ENCODE measurements at regions of chr9 and their contacts with region 1.

Region 1: DNA sequence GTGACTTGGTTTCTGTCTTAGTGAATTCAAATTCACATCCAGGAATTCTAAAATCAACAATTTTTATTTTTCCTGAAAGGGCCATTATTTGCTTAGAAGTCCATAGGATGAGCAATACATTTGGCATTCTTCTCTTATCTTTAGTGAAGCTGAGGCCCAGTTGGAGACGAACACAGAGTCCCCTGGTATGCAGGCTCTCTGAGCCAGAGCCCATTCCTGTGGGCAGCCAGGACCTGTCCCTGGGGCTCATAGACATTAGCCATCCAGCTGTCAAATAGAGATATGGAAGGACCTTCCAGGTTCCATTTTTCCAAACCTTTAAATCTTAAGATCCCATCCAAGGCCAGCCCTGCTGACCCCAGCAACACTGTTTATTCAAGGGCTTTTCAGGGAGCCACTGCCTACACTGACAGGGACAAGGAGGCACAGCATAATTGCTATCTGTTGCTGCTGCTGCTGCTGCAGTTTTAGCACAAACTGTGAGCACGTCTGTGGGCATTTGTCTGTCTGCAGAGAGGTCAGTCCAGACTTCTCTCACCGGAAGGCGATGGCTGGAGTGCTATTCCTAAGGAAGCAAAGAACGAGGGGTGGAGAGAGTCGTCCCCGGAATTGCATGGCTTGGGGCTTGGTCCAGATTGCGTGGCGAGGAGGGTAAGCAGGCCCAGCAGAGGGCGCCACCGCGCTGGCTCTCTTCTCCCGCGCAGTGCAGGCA is 639.0 kb downstream of the CCDC171 start:
- DNase-seq: peak; percentile 87
- ATAC-seq: peak; percentile 89
- H3K4me3 ChIP-seq: peak overlapping the region; percentile 1; the same call in 1 of the 2 replicates
- H3K27ac ChIP-seq: peak overlapping the region; percentile 92
- H3K4me1 ChIP-seq: peaks cover 28% of the 10 kb centered on the region
- H3K27me3 ChIP-seq: no peaks in the 10 kb centered on the region
- CTCF ChIP-seq: peak; percentile 91
- POLR2A ChIP-seq: no peak
- RAD21 ChIP-seq: peak; percentile 95

Region 2: GRCh38 chr9:15873569-15874177 is 318.2 kb before region 1 on chr9:
- CTCF ChIA-PET with region 1: no interaction called
- POLR2A ChIA-PET with region 1: no interaction called
- dilution Hi-C with region 1: no loop called
- in situ Hi-C with region 1: no loop called
- intact Hi-C with region 1: loop called (anchors 1 kb)
- DNase-seq: peak; percentile 74
- ATAC-seq: peak; percentile 70; the same call in 1 of the 2 replicates
- H3K4me3 ChIP-seq: no peak overlapping the region
- H3K27ac ChIP-seq: no peak overlapping the region
- H3K4me1 ChIP-seq: no peaks in the 10 kb centered on the region; the same call in 1 of the 2 replicates
- H3K27me3 ChIP-seq: no peaks in the 10 kb centered on the region
- CTCF ChIP-seq: peak; percentile 82
- POLR2A ChIP-seq: no peak
- RAD21 ChIP-seq: peak; percentile 87

Region 3: GRCh38 chr9:16013826-16014225 is 178.0 kb before region 1 on chr9:
- CTCF ChIA-PET with region 1: no interaction called
- POLR2A ChIA-PET with region 1: no interaction called
- dilution Hi-C with region 1: no loop called
- in situ Hi-C with region 1: no loop called
- intact Hi-C with region 1: no loop called
- DNase-seq: no peak
- ATAC-seq: no peak
- H3K4me3 ChIP-seq: no peak overlapping the region
- H3K27ac ChIP-seq: no peak overlapping the region
- H3K4me1 ChIP-seq: peaks cover 7% of the 10 kb centered on the region; the same call in 1 of the 2 replicates
- H3K27me3 ChIP-seq: no peaks in the 10 kb centered on the region
- CTCF ChIP-seq: no peak
- POLR2A ChIP-seq: no peak
- RAD21 ChIP-seq: no peak

Region 4: GRCh38 chr9:16335788-16336580 is 144.1 kb after region 1 on chr9:
- CTCF ChIA-PET with region 1: no interaction called
- POLR2A ChIA-PET with region 1: no interaction called
- dilution Hi-C with region 1: no loop called
- in situ Hi-C with region 1: no loop called
- intact Hi-C with region 1: loop called (anchors 5 kb)
- DNase-seq: peak; percentile 99
- ATAC-seq: peak; percentile 91
- H3K4me3 ChIP-seq: no peak overlapping the region
- H3K27ac ChIP-seq: peak overlapping the region; percentile 96
- H3K4me1 ChIP-seq: peaks cover 18% of the 10 kb centered on the region
- H3K27me3 ChIP-seq: no peaks in the 10 kb centered on the region
- CTCF ChIP-seq: no peak
- POLR2A ChIP-seq: no peak
- RAD21 ChIP-seq: peak; percentile 29

Region 5: DNA sequence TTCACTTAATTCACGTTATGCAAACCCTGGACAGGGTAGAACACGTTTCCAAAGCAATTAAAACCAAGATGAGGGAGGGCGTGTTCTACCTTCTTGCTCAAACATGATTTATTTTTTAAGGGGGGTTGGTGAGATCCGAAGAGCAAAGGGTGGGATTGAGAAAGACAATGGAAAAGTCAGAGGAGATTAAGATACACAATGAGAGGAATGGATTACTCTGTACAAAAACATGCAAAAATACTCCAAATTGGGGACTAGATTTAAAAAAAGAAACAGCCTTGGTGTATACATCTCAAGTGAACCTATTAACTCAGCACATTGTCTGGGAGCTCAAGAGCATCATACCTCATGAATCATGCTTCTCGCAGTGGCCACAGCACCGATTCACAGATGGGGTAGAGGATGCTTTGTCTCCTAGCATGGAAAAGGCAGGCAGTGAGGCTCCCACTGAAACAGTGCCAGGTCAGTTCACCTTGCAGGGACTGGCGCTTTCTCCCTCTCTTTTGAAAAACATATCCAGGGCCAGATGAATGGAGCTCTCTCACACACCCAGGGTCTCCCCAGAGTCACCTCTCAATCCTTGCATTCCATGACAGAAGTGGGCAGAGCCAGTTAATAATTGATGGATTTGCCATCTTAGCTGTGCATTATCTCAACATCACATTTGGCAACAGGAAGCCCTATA is 218.9 kb after region 1 on chr9:
- CTCF ChIA-PET with region 1: no interaction called
- POLR2A ChIA-PET with region 1: no interaction called
- dilution Hi-C with region 1: no loop called
- in situ Hi-C with region 1: no loop called
- intact Hi-C with region 1: no loop called
- DNase-seq: peak; percentile 85
- ATAC-seq: peak; percentile 33; the same call in 1 of the 2 replicates
- H3K4me3 ChIP-seq: no peak overlapping the region
- H3K27ac ChIP-seq: no peak overlapping the region
- H3K4me1 ChIP-seq: peaks cover 16% of the 10 kb centered on the region
- H3K27me3 ChIP-seq: no peaks in the 10 kb centered on the region; the same call in 1 of the 2 replicates
- CTCF ChIP-seq: no peak
- POLR2A ChIP-seq: no peak
- RAD21 ChIP-seq: no peak

Region 6: DNA sequence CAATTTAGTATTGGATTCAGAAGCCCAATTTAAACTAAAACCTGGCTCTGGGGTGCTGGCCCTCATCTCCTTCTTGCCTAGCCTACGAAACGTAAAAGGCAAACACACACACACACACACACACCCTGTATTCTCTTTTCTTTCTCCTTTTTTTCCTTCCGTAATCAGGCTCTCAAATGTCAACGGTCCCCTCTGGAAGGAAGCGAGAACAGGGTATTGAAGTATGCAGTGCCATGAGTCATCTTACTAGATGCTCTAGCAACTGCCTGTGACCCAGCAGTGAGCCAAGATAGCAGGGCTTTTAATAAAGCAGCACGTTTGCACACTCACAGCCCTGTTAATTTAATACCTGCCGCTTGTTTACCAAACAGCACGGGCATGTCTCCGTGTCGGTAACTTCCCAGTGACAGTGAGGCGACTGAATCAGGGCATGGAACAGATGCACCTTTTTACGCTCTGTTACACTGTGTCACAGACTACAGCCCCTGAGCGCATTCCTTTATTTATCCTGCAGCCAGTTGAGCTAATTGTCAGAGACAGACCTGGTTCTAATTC is 434.8 kb after region 1 on chr9:
- CTCF ChIA-PET with region 1: no interaction called
- POLR2A ChIA-PET with region 1: no interaction called
- dilution Hi-C with region 1: no loop called
- in situ Hi-C with region 1: no loop called
- intact Hi-C with region 1: loop called (anchors 10 kb)
- DNase-seq: peak; percentile 89
- ATAC-seq: peak; percentile 84
- H3K4me3 ChIP-seq: no peak overlapping the region
- H3K27ac ChIP-seq: peak overlapping the region; percentile 42
- H3K4me1 ChIP-seq: peaks cover 26% of the 10 kb centered on the region
- H3K27me3 ChIP-seq: no peaks in the 10 kb centered on the region
- CTCF ChIP-seq: no peak
- POLR2A ChIP-seq: no peak
- RAD21 ChIP-seq: no peak

Region 7: DNA sequence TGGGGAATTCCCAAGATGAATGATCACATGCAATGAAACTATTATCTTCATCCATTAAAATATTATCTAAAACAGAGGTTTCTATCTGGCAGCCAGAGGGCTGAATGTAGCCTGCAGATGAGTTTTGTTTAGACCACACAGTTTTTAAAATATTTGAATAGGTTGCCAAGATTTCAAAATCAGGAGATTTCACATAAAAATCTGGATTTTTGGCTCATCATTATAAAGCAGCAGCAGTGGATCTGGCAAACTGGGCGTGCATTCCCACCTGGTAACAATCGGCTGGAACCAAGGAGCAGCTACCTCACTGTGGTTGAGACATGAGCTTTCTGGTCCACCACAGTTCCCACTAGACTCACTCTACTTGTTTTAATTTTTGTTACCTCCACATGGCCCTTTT is 523.6 kb after region 1 on chr9:
- CTCF ChIA-PET with region 1: no interaction called
- POLR2A ChIA-PET with region 1: no interaction called
- dilution Hi-C with region 1: no loop called
- in situ Hi-C with region 1: loop called (anchors 10 kb)
- intact Hi-C with region 1: no loop called
- DNase-seq: peak; percentile 73
- ATAC-seq: peak; percentile 49
- H3K4me3 ChIP-seq: no peak overlapping the region
- H3K27ac ChIP-seq: no peak overlapping the region; the same call in 1 of the 2 replicates
- H3K4me1 ChIP-seq: peaks cover 14% of the 10 kb centered on the region
- H3K27me3 ChIP-seq: no peaks in the 10 kb centered on the region
- CTCF ChIP-seq: no peak
- POLR2A ChIP-seq: no peak
- RAD21 ChIP-seq: no peak

Region 8: GRCh38 chr9:16970321-16970720 is 778.5 kb after region 1 on chr9:
- CTCF ChIA-PET with region 1: no interaction called
- POLR2A ChIA-PET with region 1: no interaction called
- dilution Hi-C with region 1: no loop called
- in situ Hi-C with region 1: no loop called
- intact Hi-C with region 1: no loop called
- DNase-seq: no peak
- ATAC-seq: no peak
- H3K4me3 ChIP-seq: no peak overlapping the region
- H3K27ac ChIP-seq: no peak overlapping the region
- H3K4me1 ChIP-seq: no peaks in the 10 kb centered on the region
- H3K27me3 ChIP-seq: no peaks in the 10 kb centered on the region
- CTCF ChIP-seq: no peak
- POLR2A ChIP-seq: no peak
- RAD21 ChIP-seq: no peak

Measured in IMR-90 (cell line).